ENCODE measurements at regions of chr6 and their contacts with region 1.

Region 1: GRCh38 chr6:168250250-168250649 is 69.3 kb downstream of the DACT2 start:
- DNase-seq: no peak
- ATAC-seq: peak in 1 of 8 donors; percentile 17
- H3K4me3 ChIP-seq: no peak overlapping the region
- H3K27ac ChIP-seq: no peak overlapping the region
- H3K4me1 ChIP-seq: peaks cover 0 to 4% (median 0%) of the 10 kb centered on the region in 9 donors
- H3K27me3 ChIP-seq: peaks cover 0 to 24% (median 0%) of the 10 kb centered on the region in 7 donors
- CTCF ChIP-seq: no peak

Region 2: DNA sequence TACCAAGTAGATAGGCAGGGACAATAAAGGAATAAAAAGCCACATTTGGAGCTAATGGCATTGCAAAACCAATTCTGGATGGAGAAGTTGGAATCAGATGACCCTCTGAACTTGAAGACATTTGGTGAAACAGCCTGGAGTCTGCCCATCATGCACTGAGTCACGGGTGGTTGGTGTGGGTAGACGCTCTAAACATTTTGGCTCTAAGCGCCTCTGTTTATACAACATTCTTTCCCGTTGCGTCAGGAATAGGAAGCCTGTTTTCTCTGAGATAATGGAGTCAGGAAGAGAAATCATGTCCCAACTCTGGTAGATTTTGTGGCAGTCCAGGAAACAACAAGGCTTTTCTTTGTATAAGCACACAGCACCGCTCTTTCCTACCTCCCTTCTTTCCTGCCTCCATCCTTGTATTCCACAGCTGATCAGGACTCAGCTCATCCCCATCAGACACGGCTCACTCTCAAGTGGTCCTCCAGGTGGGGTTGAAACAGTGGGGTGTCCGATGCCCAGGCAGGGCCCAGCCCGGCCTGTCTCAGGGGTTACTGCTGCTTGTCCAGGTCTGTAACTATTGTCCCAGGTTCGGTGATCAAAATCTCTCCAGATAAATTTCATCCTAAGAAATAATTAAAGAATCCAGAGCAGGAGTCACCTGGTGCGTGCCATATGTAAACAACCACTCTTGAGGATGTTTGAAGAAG is 1651.7 kb before region 1 on chr6:
- intact Hi-C with region 1: loop called in 1 of 10 experiments (anchors 5 kb)
- DNase-seq: peak in 1 of 2 donors; percentile 49
- ATAC-seq: peak; percentile 71 to 94 (median 88)
- H3K4me3 ChIP-seq: peak overlapping the region in 1 of 10 donors; percentile 16
- H3K27ac ChIP-seq: peak overlapping the region; percentile 14 to 90 (median 82)
- H3K4me1 ChIP-seq: peaks cover 6 to 49% (median 31%) of the 10 kb centered on the region in 9 donors
- H3K27me3 ChIP-seq: no peaks in the 10 kb centered on the region
- CTCF ChIP-seq: no peak

Region 3: GRCh38 chr6:168284217-168284616 is 34.0 kb after region 1 on chr6:
- intact Hi-C with region 1: no loop called
- DNase-seq: no peak
- ATAC-seq: no peak
- H3K4me3 ChIP-seq: no peak overlapping the region
- H3K27ac ChIP-seq: no peak overlapping the region
- H3K4me1 ChIP-seq: no peaks in the 10 kb centered on the region
- H3K27me3 ChIP-seq: peaks cover 0 to 46% (median 21%) of the 10 kb centered on the region in 7 donors
- CTCF ChIP-seq: no peak

Measured in heart right ventricle (tissue), 16 donors.